Calu3 (cell line): ENCODE measurements at regions of chr3 and their contacts with region 1.

Region 1: DNA sequence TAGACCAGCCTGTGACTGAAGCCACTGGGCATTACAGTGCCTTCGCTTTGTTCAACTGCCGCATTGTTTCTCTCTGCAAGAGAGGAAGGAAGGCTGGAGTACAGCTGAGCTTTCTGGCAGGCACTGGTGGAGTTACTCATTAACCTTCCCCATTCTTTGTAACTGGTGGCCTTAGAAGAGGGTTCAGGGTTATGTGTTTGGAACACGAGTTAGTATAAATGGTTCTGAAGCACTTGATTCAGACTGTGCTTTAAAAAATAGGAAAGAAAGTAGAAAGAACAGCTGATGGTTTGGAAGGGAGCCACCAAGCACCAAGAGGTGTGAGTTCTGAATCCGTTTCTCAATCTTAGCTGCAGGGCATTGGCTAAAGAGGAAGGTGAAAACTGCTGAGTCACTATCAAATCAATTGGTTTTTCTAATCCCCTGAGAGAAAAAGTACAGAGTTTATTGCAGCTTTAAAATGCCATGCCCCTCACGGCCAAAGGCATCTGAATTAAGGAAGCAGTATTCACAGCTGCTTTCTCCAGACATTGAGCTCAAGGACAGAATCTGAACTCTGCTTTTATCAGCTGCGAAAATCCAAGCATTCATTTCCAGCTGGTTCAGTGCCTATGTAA is 3.6 kb downstream of the HGD start:
- DNase-seq: peak; percentile 70
- H3K4me3 Mint-ChIP-seq: peak overlapping the region; percentile 66
- H3K27ac Mint-ChIP-seq: peak overlapping the region; percentile 82
- H3K4me1 Mint-ChIP-seq: peaks cover 56% of the 10 kb centered on the region
- H3K27me3 Mint-ChIP-seq: no peaks in the 10 kb centered on the region
- CTCF ChIP-seq: no peak

Region 2: DNA sequence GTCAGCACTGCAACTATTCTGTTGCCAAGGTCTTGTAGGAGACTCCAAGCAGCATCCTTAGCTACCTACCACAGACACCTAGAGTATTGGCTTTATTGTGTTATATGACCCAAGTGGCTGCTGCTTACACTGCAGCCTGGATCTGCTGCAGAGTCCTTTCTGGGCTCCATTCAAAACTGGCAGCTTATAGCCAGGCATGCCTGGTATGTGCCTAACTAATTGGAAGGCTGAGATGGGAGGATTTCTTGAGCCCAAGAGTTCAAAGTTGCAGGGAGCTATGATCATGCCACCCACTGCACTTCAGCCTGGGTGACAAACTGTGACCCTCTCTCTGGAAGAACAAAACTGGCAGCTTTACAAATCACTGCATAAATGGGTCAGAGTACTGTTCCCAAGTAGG is 73.7 kb before region 1 on chr3:
- CTCF ChIA-PET with region 1: no interaction called
- intact Hi-C with region 1: loop called (anchors 5 kb)
- DNase-seq: no peak
- H3K4me3 Mint-ChIP-seq: no peak overlapping the region
- H3K27ac Mint-ChIP-seq: no peak overlapping the region
- H3K4me1 Mint-ChIP-seq: no peaks in the 10 kb centered on the region
- H3K27me3 Mint-ChIP-seq: no peaks in the 10 kb centered on the region
- CTCF ChIP-seq: no peak

Region 3: DNA sequence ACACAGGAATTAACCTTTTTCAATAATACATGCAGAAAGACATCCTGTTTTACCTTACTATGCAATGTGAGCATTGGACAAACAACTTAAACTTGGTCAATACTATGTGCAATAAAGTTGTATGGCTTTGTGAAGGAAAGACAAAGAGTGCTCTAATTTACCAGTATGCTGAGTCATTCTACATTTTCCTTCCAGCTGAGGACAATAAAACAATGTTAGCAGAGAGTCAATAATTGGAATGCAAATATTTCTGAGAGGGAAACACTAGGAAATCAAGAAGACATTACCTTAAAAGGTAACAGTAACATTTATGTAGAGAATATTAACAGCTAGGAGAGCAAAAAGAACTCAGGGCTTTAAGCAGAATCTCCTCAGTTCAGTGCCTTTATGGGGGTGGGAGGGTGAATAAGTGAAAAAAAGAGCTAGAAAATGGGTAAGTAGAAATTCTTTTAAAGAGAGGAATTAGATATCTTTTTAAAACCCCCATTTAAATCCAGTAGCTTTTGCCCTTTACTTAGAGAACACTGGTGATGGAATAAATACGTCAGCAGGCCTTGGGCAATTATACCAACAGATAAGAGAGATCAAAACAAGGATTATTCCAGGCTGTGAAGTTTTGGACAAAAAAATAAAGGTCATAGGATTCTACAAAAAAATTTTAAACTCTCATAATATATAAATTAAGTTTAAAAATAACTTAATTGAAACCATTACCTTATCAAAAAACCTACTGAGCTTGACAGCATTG is 15.2 kb after region 1 on chr3:
- CTCF ChIA-PET with region 1: interaction called, 10 read pairs
- intact Hi-C with region 1: loop called (anchors 1 kb)
- DNase-seq: no peak
- H3K4me3 Mint-ChIP-seq: peak overlapping the region; percentile 17
- H3K27ac Mint-ChIP-seq: peak overlapping the region; percentile 98
- H3K4me1 Mint-ChIP-seq: peaks cover 11% of the 10 kb centered on the region
- H3K27me3 Mint-ChIP-seq: no peaks in the 10 kb centered on the region
- CTCF ChIP-seq: no peak

Region 4: GRCh38 chr3:120742198-120742849 is 63.9 kb after region 1 on chr3 and contains the starts of genes GTF2E1 and RABL3:
- CTCF ChIA-PET with region 1: interaction called, 3 read pairs
- intact Hi-C with region 1: loop called (anchors 2 kb)
- DNase-seq: peak; percentile 95
- H3K4me3 Mint-ChIP-seq: peak within 1 kb of the TSS; percentile 77
- H3K27ac Mint-ChIP-seq: peak within 1 kb of the TSS; percentile 75
- H3K4me1 Mint-ChIP-seq: peaks cover 20% of the 10 kb centered on the region
- H3K27me3 Mint-ChIP-seq: no peaks in the 10 kb centered on the region
- CTCF ChIP-seq: no peak
- total RNA-seq, gene GTF2E1: 22.9 and 26.1 TPM in 2 replicates
- total RNA-seq, gene RABL3: 14.6 and 16.9 TPM in 2 replicates